Sigmoid colon (tissue), 7 donors: ENCODE measurements at regions of chr14 and their contacts with region 1.

Region 1: GRCh38 chr14:95098984-95099599 is 58.2 kb downstream of the DICER1 start:
- DNase-seq: peak; percentile 85
- H3K4me3 ChIP-seq: no peak overlapping the region
- H3K27ac ChIP-seq: no peak overlapping the region
- H3K4me1 ChIP-seq: peaks cover 0 to 77% (median 43%) of the 10 kb centered on the region in 4 donors
- H3K27me3 ChIP-seq: no peaks in the 10 kb centered on the region
- CTCF ChIP-seq: peak; percentile 54 to 74 (median 66)
- EP300 ChIP-seq: no peak
- POLR2A ChIP-seq: no peak

Region 2: DNA sequence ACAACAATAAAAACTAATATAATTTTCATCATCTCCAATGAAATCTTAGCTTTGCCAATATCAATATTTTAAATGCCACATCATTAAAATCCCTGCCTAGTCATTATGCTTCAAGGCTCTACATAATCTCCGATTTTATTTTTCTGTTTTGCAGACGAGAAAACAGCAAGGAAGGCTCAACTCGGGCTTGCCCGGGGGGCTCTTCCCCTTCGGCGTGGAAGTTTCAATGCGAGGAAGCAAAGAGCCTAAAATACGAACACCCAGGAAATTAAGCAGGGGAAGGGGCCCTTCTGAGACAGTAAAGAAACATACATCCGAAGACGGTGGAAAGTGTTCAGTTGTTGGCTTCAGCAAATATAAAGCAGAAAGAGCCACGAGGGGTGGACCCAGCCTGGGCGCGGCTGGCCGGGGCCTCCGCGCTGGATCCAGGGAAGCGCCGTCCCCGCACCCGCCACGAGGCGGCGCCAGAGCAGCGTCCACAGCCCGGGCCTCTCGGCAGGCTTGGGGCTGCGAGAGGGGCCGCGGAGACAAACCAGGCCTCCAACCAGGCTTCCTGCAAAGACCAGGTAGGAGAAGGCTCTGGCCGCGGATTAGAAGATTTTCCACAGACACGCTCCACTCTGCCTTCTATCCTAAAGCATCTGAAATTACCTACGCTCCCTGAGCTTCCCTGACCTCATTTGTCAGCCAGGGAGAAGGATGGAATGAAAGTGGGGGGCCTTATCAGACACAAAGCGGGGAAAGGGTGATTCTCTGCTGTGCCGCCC is 409.7 kb before region 1 on chr14:
- intact Hi-C with region 1: loop called (anchors 2 kb)
- DNase-seq: peak; percentile 75
- H3K4me3 ChIP-seq: no peak overlapping the region
- H3K27ac ChIP-seq: no peak overlapping the region
- H3K4me1 ChIP-seq: peaks cover 0 to 10% (median 8%) of the 10 kb centered on the region in 4 donors
- H3K27me3 ChIP-seq: no peaks in the 10 kb centered on the region
- CTCF ChIP-seq: peak; percentile 86 to 98 (median 93)
- EP300 ChIP-seq: no peak
- POLR2A ChIP-seq: no peak

Region 3: DNA sequence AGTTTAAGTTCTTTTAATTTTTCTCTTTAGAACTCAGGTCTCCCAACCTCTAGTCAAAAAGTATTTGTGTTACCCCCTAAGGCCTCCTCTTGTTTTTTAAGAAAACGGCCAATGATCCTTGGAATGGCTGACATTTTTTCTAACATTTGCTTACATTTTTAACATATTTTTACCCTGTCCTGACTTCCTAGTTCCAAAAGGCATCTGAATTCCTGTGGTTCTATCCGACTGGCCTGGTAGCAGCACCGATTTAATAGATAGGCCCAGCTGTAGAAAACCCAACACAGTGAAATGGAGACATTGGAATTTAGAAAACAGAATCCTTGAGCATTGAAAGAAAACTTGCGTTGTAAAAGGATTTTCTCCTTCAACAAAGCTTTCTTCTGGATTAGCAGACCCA is 194.5 kb before region 1 on chr14:
- intact Hi-C with region 1: loop called (anchors 10 kb)
- DNase-seq: no peak
- H3K4me3 ChIP-seq: no peak overlapping the region
- H3K27ac ChIP-seq: no peak overlapping the region
- H3K4me1 ChIP-seq: peaks cover 0 to 9% (median 3%) of the 10 kb centered on the region in 4 donors
- H3K27me3 ChIP-seq: no peaks in the 10 kb centered on the region
- CTCF ChIP-seq: no peak
- EP300 ChIP-seq: no peak
- POLR2A ChIP-seq: no peak

Region 4: DNA sequence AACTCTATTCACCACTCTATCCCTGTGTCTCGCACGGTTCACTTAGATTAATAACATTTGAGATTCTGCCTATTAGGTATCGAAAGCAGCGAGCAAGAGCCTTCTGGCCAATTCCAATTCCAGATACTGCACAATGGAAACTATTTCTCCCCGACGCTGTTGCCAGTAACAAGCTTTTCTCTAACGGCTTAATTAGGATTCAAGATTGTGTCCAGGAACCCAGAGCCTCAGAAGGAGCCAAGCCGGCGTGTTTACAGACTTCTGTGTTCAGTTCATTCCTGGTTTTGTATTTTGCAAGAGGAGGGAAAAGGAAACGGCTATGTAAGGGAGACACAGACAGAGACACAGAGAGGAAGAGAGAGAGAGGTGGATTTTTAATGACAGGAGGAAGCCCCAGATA is 127.3 kb before region 1 on chr14:
- intact Hi-C with region 1: loop called (anchors 2 kb)
- DNase-seq: peak; percentile 91
- H3K4me3 ChIP-seq: peak overlapping the region in 3 of 4 donors; percentile 12 to 25 (median 14)
- H3K27ac ChIP-seq: peak overlapping the region; percentile 64 to 83 (median 78)
- H3K4me1 ChIP-seq: peaks cover 0 to 15% (median 10%) of the 10 kb centered on the region in 4 donors
- H3K27me3 ChIP-seq: no peaks in the 10 kb centered on the region
- CTCF ChIP-seq: no peak
- EP300 ChIP-seq: peak in 3 of 4 donors; percentile 51 to 83 (median 61)
- POLR2A ChIP-seq: no peak

Region 5: GRCh38 chr14:95046711-95047681 is 52.1 kb before region 1 on chr14:
- intact Hi-C with region 1: loop called (anchors 5 kb)
- DNase-seq: peak; percentile 90
- H3K4me3 ChIP-seq: no peak overlapping the region
- H3K27ac ChIP-seq: peak overlapping the region in 3 of 4 donors; percentile 68 to 77 (median 71)
- H3K4me1 ChIP-seq: peaks cover 0 to 23% (median 21%) of the 10 kb centered on the region in 4 donors
- H3K27me3 ChIP-seq: no peaks in the 10 kb centered on the region
- CTCF ChIP-seq: no peak
- EP300 ChIP-seq: peak; percentile 37 to 90 (median 66)
- POLR2A ChIP-seq: no peak